ENCODE measurements at regions of chr13 and their contacts with region 1.

Region 1: DNA sequence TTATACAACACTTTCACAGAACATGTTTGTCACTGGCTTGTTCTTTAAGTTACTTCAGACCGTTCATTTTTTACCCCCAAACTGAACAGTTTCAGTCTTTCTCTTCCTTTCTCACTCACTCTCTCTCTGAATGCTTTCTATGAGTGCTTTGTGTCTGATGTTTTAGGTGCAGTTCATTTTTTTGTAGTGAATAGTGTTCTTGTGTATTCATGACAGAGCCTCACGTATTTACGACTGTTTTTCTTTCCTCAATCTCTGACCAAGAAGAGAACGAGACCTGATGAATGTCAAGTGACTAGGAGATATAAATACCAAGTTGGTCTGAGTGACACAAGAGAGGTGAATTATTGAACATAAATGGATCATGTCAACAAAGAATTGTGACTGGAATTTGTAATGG is 1525.0 kb upstream of the MIR17HG start:
- DNase-seq: no peak
- H3K4me3 ChIP-seq: no peak overlapping the region
- H3K27ac ChIP-seq: no peak overlapping the region
- H3K4me1 ChIP-seq: no peaks in the 10 kb centered on the region
- H3K27me3 ChIP-seq: no peaks in the 10 kb centered on the region
- CTCF ChIP-seq: no peak
- POLR2A ChIP-seq: no peak

Region 2: DNA sequence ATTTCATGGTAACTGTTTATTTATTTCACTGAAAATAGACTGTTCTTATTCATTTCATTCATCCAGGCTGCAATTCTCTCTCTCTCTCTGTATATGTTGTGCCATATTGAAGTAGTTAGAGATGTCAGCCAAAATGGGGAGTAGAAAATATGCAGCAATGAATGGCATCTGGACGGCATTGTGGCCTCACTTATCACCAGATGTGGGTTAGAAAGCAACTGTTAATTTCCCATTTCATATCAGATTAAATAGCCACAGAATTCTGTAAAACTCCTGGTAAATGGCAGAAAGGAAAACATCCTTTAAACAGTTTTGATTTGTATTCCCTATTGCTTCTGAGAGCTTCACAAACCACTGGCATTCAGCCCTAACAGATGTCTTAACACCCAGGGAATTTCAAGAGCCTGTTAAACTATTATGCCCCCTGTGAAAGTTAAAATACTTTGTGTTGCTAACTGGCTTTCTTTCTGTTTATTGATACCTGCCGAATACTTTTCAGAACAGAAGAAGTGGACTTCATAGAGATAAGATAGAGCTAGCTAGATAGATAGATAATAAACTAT is 238.3 kb before region 1 on chr13:
- intact Hi-C with region 1: loop called (anchors 5 kb)
- DNase-seq: no peak
- H3K4me3 ChIP-seq: no peak overlapping the region
- H3K27ac ChIP-seq: no peak overlapping the region
- H3K4me1 ChIP-seq: no peaks in the 10 kb centered on the region
- H3K27me3 ChIP-seq: no peaks in the 10 kb centered on the region
- CTCF ChIP-seq: no peak
- POLR2A ChIP-seq: no peak

Measured in breast epithelium (tissue), 4 donors.